B cell (primary cell): ENCODE measurements at regions of chr2 and their contacts with region 1.

Region 1: GRCh38 chr2:148739454-148740105 is 95.0 kb downstream of the EPC2 start:
- DNase-seq: peak; percentile 16
- ATAC-seq: no peak
- H3K4me3 ChIP-seq: no peak overlapping the region
- H3K4me3 Mint-ChIP-seq: peak overlapping the region; percentile 18
- H3K27ac ChIP-seq: no peak overlapping the region
- H3K27ac Mint-ChIP-seq: no peak overlapping the region
- H3K4me1 ChIP-seq: peaks cover 6 to 20% of the 10 kb centered on the region in 2 donors
- H3K4me1 Mint-ChIP-seq: peaks cover 40% of the 10 kb centered on the region
- H3K27me3 ChIP-seq: no peaks in the 10 kb centered on the region
- H3K27me3 Mint-ChIP-seq: no peaks in the 10 kb centered on the region
- CTCF ChIP-seq: no peak

Region 2: GRCh38 chr2:148754864-148755263 is 15.3 kb after region 1 on chr2:
- CTCF ChIA-PET with region 1: interaction called, 4 read pairs
- POLR2A ChIA-PET with region 1: interaction called, 9 read pairs
- intact Hi-C with region 1: loop called (anchors 2 kb)
- DNase-seq: no peak
- ATAC-seq: no peak
- H3K4me3 ChIP-seq: no peak overlapping the region
- H3K4me3 Mint-ChIP-seq: no peak overlapping the region
- H3K27ac ChIP-seq: no peak overlapping the region
- H3K27ac Mint-ChIP-seq: no peak overlapping the region
- H3K4me1 ChIP-seq: no peaks in the 10 kb centered on the region
- H3K4me1 Mint-ChIP-seq: no peaks in the 10 kb centered on the region
- H3K27me3 ChIP-seq: no peaks in the 10 kb centered on the region
- H3K27me3 Mint-ChIP-seq: no peaks in the 10 kb centered on the region
- CTCF ChIP-seq: no peak